Ovary (tissue), 10 donors: ENCODE measurements at regions of chr11 and their contacts with region 1.

Region 1: GRCh38 chr11:74929431-74930363 is 19.2 kb downstream of the XRRA1 start:
- DNase-seq: peak; percentile 32 to 69 (median 46)
- H3K4me3 ChIP-seq: no peak overlapping the region
- H3K27ac ChIP-seq: no peak overlapping the region
- H3K4me1 ChIP-seq: no peaks in the 10 kb centered on the region
- H3K27me3 ChIP-seq: no peaks in the 10 kb centered on the region
- CTCF ChIP-seq: peak; percentile 55 to 69 (median 56)
- EP300 ChIP-seq: no peak
- POLR2A ChIP-seq: no peak

Region 2: DNA sequence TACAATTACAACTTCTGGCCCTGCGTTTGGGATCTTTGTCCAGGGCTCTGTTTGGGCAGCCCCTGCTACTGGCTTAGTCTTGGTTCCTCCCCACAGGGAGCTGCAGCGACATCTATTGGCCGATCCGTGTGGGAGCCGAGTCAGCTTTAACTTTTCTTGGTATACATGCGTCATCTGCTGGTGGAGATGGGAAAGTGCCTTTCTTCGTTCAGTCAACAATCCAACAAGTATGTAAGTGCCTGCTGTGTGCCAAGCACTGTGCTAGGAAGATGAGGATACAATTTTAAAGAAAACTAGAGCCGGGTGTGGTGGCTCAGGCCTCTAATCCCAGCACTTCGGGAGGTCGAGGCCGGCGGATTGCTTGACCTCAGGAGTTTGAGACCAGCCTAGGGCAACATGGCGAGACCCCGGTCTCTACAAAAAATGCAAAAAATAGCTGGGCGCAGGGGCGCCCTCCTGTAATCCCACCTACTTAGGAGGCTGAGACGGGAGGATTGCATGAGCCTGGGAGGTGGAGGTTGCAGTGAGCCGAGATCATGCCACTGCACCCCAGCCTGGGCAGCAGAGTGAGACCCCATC is 319.1 kb after region 1 on chr11:
- intact Hi-C with region 1: loop called (anchors 5 kb)
- DNase-seq: peak; percentile 80 to 90 (median 89)
- H3K4me3 ChIP-seq: no peak overlapping the region
- H3K27ac ChIP-seq: no peak overlapping the region
- H3K4me1 ChIP-seq: no peaks in the 10 kb centered on the region
- H3K27me3 ChIP-seq: no peaks in the 10 kb centered on the region
- CTCF ChIP-seq: peak; percentile 87 to 96 (median 91)
- EP300 ChIP-seq: no peak
- POLR2A ChIP-seq: no peak